CD4-positive, alpha-beta memory T cell (primary cell): ENCODE measurements at regions of chrX and their contacts with region 1.

Region 1: GRCh38 chrX:110317820-110318658 is at the start of gene AMMECR1:
- DNase-seq: peak; percentile 80 to 86 (median 83)
- H3K4me3 ChIP-seq: peak within 1 kb of the TSS; percentile 47 to 75
- H3K4me3 Mint-ChIP-seq: peak within 1 kb of the TSS; percentile 93 to 98 (median 96)
- H3K27ac ChIP-seq: peak within 1 kb of the TSS; percentile 68
- H3K27ac Mint-ChIP-seq: peak within 1 kb of the TSS; percentile 93 to 98 (median 97)
- H3K4me1 ChIP-seq: peaks cover 31% of the 10 kb centered on the region
- H3K4me1 Mint-ChIP-seq: peaks cover 16 to 44% (median 24%) of the 10 kb centered on the region in 4 donors
- H3K27me3 ChIP-seq: no peaks in the 10 kb centered on the region
- H3K27me3 Mint-ChIP-seq: no peaks in the 10 kb centered on the region
- total RNA-seq, gene AMMECR1: 16.4 to 21.7 TPM

Region 2: DNA sequence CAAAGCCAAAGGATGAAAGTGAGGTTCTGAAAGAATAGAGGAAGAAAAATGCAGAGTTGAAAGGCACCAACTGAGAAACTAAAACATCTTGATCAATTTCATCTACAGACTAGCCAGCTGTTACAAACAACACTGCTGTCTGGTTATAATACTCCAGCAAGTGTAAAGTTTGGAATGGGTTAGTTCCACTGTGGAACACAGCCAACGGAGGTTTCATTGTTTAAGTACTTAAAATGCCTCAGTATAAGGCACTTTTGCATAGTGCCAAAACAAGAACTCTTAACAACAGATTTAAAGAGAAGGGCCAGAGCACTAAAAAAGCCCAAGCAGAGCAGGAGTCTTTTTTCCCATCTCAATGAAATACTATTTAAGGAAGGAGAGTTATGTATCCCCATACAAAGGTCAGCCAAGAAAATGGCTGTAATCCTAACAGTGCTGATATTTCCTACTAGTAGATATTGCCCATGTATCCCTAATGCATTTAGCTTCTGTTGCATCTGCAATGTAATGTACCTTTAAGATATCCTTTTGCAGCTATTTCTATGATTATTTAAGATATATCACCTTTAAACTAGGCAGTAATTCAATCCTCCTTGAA is 601.5 kb before region 1 on chrX:
- CTCF ChIA-PET with region 1: no interaction called
- POLR2A ChIA-PET with region 1: no interaction called
- intact Hi-C with region 1: no loop called
- DNase-seq: no peak
- H3K4me3 ChIP-seq: no peak overlapping the region
- H3K4me3 Mint-ChIP-seq: no peak overlapping the region
- H3K27ac ChIP-seq: no peak overlapping the region
- H3K27ac Mint-ChIP-seq: peak overlapping the region in 2 of 7 donors; percentile 4 to 68
- H3K4me1 ChIP-seq: no peaks in the 10 kb centered on the region
- H3K4me1 Mint-ChIP-seq: peaks cover 13 to 35% (median 25%) of the 10 kb centered on the region in 4 donors
- H3K27me3 ChIP-seq: no peaks in the 10 kb centered on the region
- H3K27me3 Mint-ChIP-seq: no peaks in the 10 kb centered on the region

Region 3: GRCh38 chrX:110002300-110003166 is 315.5 kb before region 1 on chrX and contains the start of gene TMEM164:
- CTCF ChIA-PET with region 1: no interaction called
- POLR2A ChIA-PET with region 1: no interaction called
- intact Hi-C with region 1: loop called (anchors 10 kb)
- DNase-seq: peak; percentile 74 to 85 (median 81)
- H3K4me3 ChIP-seq: peak within 1 kb of the TSS in 1 of 2 donors; percentile 60
- H3K4me3 Mint-ChIP-seq: peak within 1 kb of the TSS; percentile 86 to 99 (median 89)
- H3K27ac ChIP-seq: peak within 1 kb of the TSS; percentile 43
- H3K27ac Mint-ChIP-seq: peak within 1 kb of the TSS; percentile 80 to 94 (median 92)
- H3K4me1 ChIP-seq: peaks cover 35% of the 10 kb centered on the region
- H3K4me1 Mint-ChIP-seq: peaks cover 19 to 48% (median 32%) of the 10 kb centered on the region in 4 donors
- H3K27me3 ChIP-seq: no peaks in the 10 kb centered on the region
- H3K27me3 Mint-ChIP-seq: no peaks in the 10 kb centered on the region
- total RNA-seq, gene TMEM164: 16.8 to 17.2 TPM

Region 4: GRCh38 chrX:110188756-110189558 is 129.1 kb before region 1 on chrX:
- CTCF ChIA-PET with region 1: no interaction called
- POLR2A ChIA-PET with region 1: interaction called, 20 read pairs
- intact Hi-C with region 1: loop called (anchors 5 kb)
- DNase-seq: no peak
- H3K4me3 ChIP-seq: no peak overlapping the region
- H3K4me3 Mint-ChIP-seq: peak overlapping the region in 6 of 8 donors; percentile 35 to 69 (median 55)
- H3K27ac ChIP-seq: no peak overlapping the region
- H3K27ac Mint-ChIP-seq: peak overlapping the region; percentile 20 to 83 (median 48)
- H3K4me1 ChIP-seq: peaks cover 25% of the 10 kb centered on the region
- H3K4me1 Mint-ChIP-seq: peaks cover 18 to 32% (median 24%) of the 10 kb centered on the region in 4 donors
- H3K27me3 ChIP-seq: no peaks in the 10 kb centered on the region
- H3K27me3 Mint-ChIP-seq: no peaks in the 10 kb centered on the region

Region 5: GRCh38 chrX:110241816-110242215 is 76.2 kb before region 1 on chrX:
- CTCF ChIA-PET with region 1: interaction called, 5 read pairs
- POLR2A ChIA-PET with region 1: interaction called, 34 read pairs
- intact Hi-C with region 1: no loop called
- DNase-seq: no peak
- H3K4me3 ChIP-seq: no peak overlapping the region
- H3K4me3 Mint-ChIP-seq: peak overlapping the region in 2 of 8 donors; percentile 17 to 20
- H3K27ac ChIP-seq: no peak overlapping the region
- H3K27ac Mint-ChIP-seq: peak overlapping the region in 1 of 7 donors; percentile 46
- H3K4me1 ChIP-seq: peaks cover 57% of the 10 kb centered on the region
- H3K4me1 Mint-ChIP-seq: peaks cover 33 to 82% (median 63%) of the 10 kb centered on the region in 4 donors
- H3K27me3 ChIP-seq: no peaks in the 10 kb centered on the region
- H3K27me3 Mint-ChIP-seq: no peaks in the 10 kb centered on the region

Region 6: GRCh38 chrX:110363244-110363643 is 45.2 kb after region 1 on chrX:
- CTCF ChIA-PET with region 1: no interaction called
- POLR2A ChIA-PET with region 1: no interaction called
- intact Hi-C with region 1: no loop called
- DNase-seq: no peak
- H3K4me3 ChIP-seq: no peak overlapping the region
- H3K4me3 Mint-ChIP-seq: no peak overlapping the region
- H3K27ac ChIP-seq: no peak overlapping the region
- H3K27ac Mint-ChIP-seq: no peak overlapping the region
- H3K4me1 ChIP-seq: no peaks in the 10 kb centered on the region
- H3K4me1 Mint-ChIP-seq: no peaks in the 10 kb centered on the region
- H3K27me3 ChIP-seq: no peaks in the 10 kb centered on the region
- H3K27me3 Mint-ChIP-seq: no peaks in the 10 kb centered on the region

Region 7: DNA sequence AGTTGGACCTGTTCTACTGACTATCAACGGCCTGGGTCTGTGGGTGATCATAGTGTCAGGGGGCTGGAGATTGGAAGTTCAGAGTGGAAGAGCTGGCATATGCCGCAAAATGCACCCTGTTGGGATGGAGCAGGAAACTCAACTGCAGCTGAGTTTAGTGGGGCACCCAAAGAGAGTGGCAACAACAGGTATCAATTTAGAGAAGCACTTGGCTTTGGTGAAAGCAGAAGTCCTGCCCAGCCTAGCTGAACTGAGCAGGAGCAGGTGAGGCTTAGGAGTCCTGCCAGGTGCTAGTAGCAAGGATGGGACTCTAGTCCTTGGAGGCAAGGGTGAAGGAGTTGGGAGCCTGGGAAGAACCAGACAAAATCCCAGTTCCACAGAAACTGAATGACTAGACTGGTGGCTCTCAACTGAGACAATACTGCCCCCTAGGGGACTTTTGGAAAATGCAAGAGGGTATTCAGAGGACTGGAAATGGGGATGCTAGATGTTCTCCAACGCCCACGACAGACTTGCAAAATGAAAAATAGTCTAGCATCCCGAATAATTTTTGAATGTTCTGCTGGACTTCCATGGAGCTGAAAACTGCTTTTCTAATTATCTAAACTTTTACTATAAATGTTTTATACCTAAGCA is 90.0 kb after region 1 on chrX:
- CTCF ChIA-PET with region 1: interaction called, 6 read pairs
- POLR2A ChIA-PET with region 1: no interaction called
- intact Hi-C with region 1: loop called (anchors 10 kb)
- DNase-seq: peak; percentile 45 to 64 (median 58)
- H3K4me3 ChIP-seq: no peak overlapping the region
- H3K4me3 Mint-ChIP-seq: no peak overlapping the region
- H3K27ac ChIP-seq: no peak overlapping the region
- H3K27ac Mint-ChIP-seq: no peak overlapping the region
- H3K4me1 ChIP-seq: no peaks in the 10 kb centered on the region
- H3K4me1 Mint-ChIP-seq: peaks cover 0 to 2% (median under 1%) of the 10 kb centered on the region in 4 donors
- H3K27me3 ChIP-seq: no peaks in the 10 kb centered on the region
- H3K27me3 Mint-ChIP-seq: peaks cover under 1 to 3% of the 10 kb centered on the region in 2 donors